ENCODE measurements at regions of chr5 and their contacts with region 1.

Region 1: GRCh38 chr5:16135003-16135402 is 44.6 kb downstream of the MARCHF11 start:
- DNase-seq: no peak

Region 2: DNA sequence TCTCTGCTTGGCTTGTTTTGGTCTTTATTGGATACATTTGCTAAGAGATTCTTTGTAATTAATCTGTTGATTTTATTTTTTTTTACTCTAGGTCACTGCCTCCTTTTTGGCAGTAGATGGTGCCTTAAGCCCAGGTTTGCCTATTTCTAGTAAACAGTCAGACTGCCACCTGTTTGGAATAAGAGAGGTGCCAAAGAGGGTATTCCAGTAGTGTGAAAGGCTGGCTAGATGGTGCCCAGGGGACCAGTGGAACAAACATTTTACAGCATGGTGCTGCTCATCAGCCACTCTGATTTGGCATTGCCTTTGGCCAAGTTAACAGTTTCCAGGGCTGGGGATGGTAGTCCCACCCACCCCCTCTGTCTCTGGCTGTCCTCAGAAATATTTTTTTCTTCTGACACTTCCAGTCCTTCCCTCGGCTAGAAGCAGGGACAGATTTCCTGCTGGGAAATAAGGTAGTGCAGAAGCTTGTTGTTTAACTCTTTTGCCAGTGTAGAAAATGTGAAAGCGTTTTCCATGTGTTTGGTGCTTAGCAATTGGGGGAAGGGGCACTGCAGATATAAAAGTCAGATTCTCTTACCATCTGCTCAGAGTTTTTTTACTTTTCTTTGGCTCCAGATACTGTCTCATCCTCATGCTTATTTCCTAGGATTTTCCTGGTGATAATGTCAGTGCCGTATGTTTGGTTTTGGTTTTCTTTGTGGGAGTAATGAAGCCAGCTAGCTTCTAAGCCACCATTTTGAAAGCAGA is 671.6 kb before region 1 on chr5:
- intact Hi-C with region 1: loop called (anchors 5 kb)
- DNase-seq: no peak

Region 3: DNA sequence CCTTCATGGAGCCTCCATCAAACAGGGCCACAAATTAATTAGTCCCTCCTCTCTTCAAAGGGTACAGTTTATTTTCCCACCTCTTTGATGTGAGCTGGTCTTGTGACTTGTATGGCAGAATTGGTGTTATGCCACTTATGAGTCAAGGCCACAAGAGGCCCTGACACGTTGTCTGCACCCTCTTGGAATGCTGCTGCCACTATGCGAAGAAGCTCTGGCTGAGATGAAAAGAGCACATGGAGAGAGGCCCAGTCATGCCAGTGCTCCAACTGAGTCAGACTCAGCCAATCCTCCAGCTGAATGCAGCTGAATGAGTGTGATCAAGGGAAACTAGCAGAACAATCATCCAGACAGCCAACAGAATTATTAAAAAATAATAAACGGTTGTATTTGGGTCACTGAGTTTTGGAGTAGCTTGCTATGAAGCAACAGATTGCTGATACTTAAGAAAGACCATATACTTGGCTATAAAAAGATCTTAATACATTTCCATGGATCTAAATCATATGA is 83.7 kb before region 1 on chr5:
- intact Hi-C with region 1: no loop called
- DNase-seq: no peak

Region 4: GRCh38 chr5:16178745-16179372 is 43.9 kb after region 1 on chr5:
- intact Hi-C with region 1: no loop called
- DNase-seq: peak; percentile 21 to 85 (median 62)

Measured in head of caudate nucleus (tissue), 42 donors.